ENCODE measurements at regions of chr2 and their contacts with region 1.

Region 1: GRCh38 chr2:113390124-113390849 is 47.2 kb upstream of the ZNG1B start:
- H3K4me3 ChIP-seq: no peak overlapping the region
- H3K27ac ChIP-seq: no peak overlapping the region
- H3K4me1 ChIP-seq: no peaks in the 10 kb centered on the region
- CTCF ChIP-seq: peak; percentile 75

Region 2: GRCh38 chr2:113203901-113204519 is 186.3 kb before region 1 on chr2:
- CTCF ChIA-PET with region 1: interaction called, 50 read pairs
- POLR2A ChIA-PET with region 1: no interaction called
- H3K4me3 ChIP-seq: no peak overlapping the region
- H3K27ac ChIP-seq: no peak overlapping the region
- H3K4me1 ChIP-seq: peaks cover 2% of the 10 kb centered on the region; the same call in 1 of the 2 replicates
- CTCF ChIP-seq: peak; percentile 86

Region 3: DNA sequence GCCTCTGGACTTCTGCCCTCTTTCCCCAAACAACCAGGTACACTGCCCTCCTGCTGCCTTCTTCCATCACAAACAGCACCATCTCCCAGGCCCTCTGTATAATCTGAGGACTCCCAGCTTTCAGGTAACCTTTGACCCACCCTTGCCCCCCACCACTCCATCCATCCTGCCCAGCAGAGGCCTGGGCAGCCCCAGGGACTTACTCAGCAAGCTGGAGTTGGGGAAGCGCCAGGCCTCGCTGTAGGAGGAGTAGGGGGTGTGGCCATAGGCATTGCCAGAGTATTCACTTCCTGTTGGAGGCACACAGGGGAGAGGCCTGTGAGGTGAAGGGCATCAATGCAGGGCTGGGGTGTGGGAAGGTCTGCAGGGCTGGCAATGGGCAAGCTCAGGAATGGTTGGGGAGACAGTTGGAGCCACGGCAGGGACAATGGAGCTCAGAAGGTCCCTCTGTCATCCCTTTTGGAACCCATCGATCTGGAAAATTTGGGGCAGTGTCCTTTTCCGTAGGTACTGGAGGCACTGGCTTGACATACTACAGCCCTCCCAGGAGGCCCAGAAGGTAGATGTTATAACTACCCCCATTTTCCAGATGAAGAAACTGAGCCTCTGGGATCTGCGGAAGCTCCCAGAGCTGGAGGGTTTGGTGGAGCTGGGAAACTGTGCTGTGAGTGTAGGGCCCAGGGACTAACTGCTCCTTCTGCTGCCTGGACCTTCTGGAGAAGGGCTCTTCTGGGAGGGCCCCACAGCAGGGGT is 170.2 kb before region 1 on chr2:
- CTCF ChIA-PET with region 1: interaction called, 11 read pairs
- POLR2A ChIA-PET with region 1: no interaction called
- H3K4me3 ChIP-seq: no peak overlapping the region
- H3K27ac ChIP-seq: no peak overlapping the region
- H3K4me1 ChIP-seq: no peaks in the 10 kb centered on the region
- CTCF ChIP-seq: no peak

Region 4: GRCh38 chr2:113248997-113249770 is 141.1 kb before region 1 on chr2:
- CTCF ChIA-PET with region 1: interaction called, 13 read pairs
- POLR2A ChIA-PET with region 1: no interaction called
- H3K4me3 ChIP-seq: no peak overlapping the region
- H3K27ac ChIP-seq: no peak overlapping the region
- H3K4me1 ChIP-seq: no peaks in the 10 kb centered on the region
- CTCF ChIP-seq: peak; percentile 65

Region 5: DNA sequence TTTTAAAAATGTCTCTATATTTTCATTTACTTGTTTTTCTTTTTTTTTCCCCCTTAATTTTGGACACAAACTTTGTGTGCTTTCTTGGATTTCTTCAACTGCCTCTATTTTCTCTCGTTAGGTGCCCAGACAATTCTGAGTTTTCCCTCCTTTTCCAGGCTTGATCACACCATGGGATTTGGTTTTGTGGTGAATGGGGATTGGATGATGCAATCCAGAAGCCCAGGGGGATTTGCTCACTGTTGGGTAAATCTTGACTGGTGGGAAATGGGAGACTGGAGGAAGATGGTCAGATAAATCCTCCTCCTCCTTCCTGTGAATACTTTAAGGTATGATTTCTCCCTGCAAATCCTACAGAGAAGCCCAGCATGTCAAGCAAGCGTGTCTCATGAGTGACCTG is 92.1 kb before region 1 on chr2:
- CTCF ChIA-PET with region 1: interaction called, 10 read pairs
- POLR2A ChIA-PET with region 1: no interaction called
- H3K4me3 ChIP-seq: no peak overlapping the region
- H3K27ac ChIP-seq: no peak overlapping the region
- H3K4me1 ChIP-seq: no peaks in the 10 kb centered on the region
- CTCF ChIP-seq: no peak